Gastrocnemius medialis (tissue), 4 donors: ENCODE measurements at regions of chr5 and their contacts with region 1.

Region 1: GRCh38 chr5:126339215-126339805 is 83.9 kb upstream of the GRAMD2B start:
- DNase-seq: peak in 1 of 2 donors; percentile 15
- ATAC-seq: no peak
- H3K4me3 ChIP-seq: no peak overlapping the region
- H3K27ac ChIP-seq: no peak overlapping the region
- H3K4me1 ChIP-seq: no peaks in the 10 kb centered on the region
- H3K27me3 ChIP-seq: no peaks in the 10 kb centered on the region
- CTCF ChIP-seq: peak; percentile 69 to 88 (median 78)
- POLR2A ChIP-seq: no peak

Region 2: GRCh38 chr5:126422989-126423788 is 83.9 kb after region 1 on chr5 and contains the start of gene GRAMD2B:
- in situ Hi-C with region 1: no loop called
- intact Hi-C with region 1: no loop called
- DNase-seq: peak; percentile 51 to 72
- ATAC-seq: peak; percentile 89 to 90
- H3K4me3 ChIP-seq: peak within 1 kb of the TSS; percentile 55 to 73 (median 68)
- H3K27ac ChIP-seq: peak within 1 kb of the TSS; percentile 78 to 85 (median 81)
- H3K4me1 ChIP-seq: no peaks in the 10 kb centered on the region
- H3K27me3 ChIP-seq: no peaks in the 10 kb centered on the region
- CTCF ChIP-seq: no peak
- POLR2A ChIP-seq: peak; percentile 60 to 72
- total RNA-seq, gene GRAMD2B: 4.6 to 10.4 (median 8.9) TPM

Region 3: DNA sequence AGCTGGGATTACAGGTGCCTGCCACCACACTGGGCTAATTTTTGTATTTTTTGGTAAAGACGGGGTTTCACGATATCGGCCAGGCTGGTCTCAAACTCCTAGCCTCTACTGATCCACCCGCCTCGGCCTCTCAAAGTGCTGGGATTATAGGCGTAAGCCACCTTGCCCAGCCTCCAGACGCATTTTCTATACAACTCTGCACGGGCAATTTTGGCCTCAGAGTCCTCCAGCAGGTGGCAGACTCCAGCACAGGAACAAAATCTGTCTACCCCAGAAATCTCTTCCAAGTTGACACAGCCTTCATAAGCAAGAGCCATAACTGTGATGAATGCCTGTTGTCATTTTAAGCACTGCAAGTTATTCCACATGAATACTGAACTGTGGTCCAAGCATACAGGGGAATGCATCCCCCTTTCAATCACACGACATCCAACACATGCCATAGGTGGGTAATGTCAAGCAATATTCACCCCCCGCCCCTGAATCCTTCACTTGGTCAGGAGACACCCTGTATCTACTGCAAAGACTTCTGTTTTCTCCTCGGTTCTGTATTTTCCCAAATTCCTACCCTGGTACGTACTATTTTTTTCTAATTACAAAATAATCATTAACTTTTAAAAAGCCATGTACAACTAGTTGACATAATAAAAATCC is 204.9 kb after region 1 on chr5:
- in situ Hi-C with region 1: no loop called
- intact Hi-C with region 1: loop called (anchors 1 kb)
- DNase-seq: no peak
- ATAC-seq: no peak
- H3K4me3 ChIP-seq: no peak overlapping the region
- H3K27ac ChIP-seq: no peak overlapping the region
- H3K4me1 ChIP-seq: no peaks in the 10 kb centered on the region
- H3K27me3 ChIP-seq: no peaks in the 10 kb centered on the region
- CTCF ChIP-seq: no peak
- POLR2A ChIP-seq: no peak

Region 4: DNA sequence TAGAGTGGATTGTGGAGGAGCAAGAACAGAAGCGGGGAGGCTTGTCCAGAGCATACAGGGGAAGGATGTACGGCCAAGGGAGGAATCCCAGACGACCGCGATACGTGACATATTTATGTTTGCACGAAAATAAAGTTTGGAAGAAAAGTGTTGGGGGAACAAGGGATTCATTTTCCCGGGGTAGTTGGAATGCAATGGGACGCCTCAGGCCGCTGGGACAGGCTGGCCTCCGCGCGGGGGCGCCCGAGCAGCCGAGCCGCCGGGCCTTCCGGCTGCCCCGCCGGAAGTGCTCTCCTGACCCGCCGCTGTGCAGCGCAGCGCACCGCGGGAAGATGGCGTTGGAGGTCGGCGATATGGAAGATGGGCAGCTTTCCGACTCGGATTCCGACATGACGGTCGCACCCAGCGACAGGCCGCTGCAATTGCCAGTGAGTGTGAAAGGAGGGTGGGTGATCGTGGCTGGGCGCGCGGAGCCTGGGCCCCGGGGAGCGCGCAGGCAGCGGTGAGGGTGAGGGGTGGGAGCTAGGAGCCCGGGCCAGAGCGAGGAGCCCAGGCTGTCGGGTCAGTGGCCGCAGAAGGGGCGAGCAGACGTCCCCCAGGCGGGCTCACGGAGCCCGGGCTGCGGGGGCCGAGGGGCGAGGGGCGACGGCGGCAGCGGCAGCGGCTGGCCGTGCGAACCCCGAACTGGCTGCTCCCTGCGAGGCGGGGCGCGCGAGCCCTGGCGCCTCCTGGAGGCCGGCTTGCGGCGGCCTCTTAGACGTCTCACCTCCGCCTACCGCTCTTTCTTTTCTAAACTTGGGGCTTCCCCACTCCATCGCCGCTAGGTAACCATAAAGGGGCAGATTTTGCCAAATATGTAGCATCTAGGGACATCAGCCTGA is 261.6 kb after region 1 on chr5 and contains the start of gene PHAX:
- in situ Hi-C with region 1: no loop called
- intact Hi-C with region 1: loop called (anchors 2 kb)
- DNase-seq: peak; percentile 35 to 61
- ATAC-seq: peak; percentile 95 to 97
- H3K4me3 ChIP-seq: peak within 1 kb of the TSS; percentile 83 to 97 (median 91)
- H3K27ac ChIP-seq: peak within 1 kb of the TSS; percentile 77 to 89 (median 81)
- H3K4me1 ChIP-seq: peaks cover 23 to 28% of the 10 kb centered on the region in 2 donors
- H3K27me3 ChIP-seq: no peaks in the 10 kb centered on the region
- CTCF ChIP-seq: peak in 4 of 5 experiments; percentile 36 to 60 (median 48)
- POLR2A ChIP-seq: peak; percentile 25 to 34
- total RNA-seq, gene PHAX: 33.3 to 50.6 (median 38.4) TPM